ENCODE measurements at regions of chr10 and their contacts with region 1.

Region 1: DNA sequence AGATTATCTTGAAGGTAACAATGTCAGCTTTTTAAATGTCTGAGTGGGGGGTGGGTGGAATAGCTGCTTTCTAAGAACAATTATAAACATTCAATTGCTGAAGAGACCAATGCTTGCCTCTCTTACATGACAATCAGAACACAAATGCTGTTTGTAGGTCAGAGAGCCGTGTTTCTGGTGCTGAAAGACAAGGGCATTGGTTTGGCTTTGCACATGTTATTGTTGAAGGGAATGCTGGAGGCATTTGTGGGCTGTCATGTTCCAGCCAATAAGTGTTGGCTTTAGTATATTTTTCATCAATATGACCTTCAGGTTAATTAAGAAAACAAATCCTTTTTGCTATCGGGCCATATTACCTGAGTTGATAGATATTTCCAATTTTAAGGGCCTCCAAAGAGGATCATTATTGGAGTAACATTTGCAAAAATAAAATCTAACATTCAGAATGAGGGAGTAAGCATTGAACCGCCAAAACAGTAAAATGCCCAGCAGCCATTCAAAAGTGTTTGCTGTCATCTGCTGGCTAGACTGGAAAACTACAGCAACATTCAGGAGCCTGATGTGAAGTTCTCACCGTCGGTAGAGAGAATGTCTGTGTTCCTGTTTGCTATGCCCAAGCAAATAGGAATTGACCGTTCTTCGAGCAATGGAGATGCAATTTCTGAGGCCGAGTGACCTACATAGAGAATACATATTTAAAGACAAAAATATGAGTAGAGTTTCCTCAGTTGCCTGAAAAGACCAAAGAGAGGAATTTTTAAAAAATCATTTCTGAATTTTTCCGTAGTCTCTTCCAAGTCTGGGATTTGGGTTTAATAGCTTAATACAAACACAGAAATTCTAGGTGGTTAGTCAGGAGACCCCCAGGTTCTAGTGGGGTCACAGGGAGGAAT is 118.9 kb downstream of the APBB1IP start:
- DNase-seq: no peak
- H3K4me3 ChIP-seq: no peak overlapping the region
- H3K27ac ChIP-seq: no peak overlapping the region
- H3K4me1 ChIP-seq: no peaks in the 10 kb centered on the region
- H3K27me3 ChIP-seq: peaks cover 65% of the 10 kb centered on the region
- CTCF ChIP-seq: peak; percentile 85

Region 2: DNA sequence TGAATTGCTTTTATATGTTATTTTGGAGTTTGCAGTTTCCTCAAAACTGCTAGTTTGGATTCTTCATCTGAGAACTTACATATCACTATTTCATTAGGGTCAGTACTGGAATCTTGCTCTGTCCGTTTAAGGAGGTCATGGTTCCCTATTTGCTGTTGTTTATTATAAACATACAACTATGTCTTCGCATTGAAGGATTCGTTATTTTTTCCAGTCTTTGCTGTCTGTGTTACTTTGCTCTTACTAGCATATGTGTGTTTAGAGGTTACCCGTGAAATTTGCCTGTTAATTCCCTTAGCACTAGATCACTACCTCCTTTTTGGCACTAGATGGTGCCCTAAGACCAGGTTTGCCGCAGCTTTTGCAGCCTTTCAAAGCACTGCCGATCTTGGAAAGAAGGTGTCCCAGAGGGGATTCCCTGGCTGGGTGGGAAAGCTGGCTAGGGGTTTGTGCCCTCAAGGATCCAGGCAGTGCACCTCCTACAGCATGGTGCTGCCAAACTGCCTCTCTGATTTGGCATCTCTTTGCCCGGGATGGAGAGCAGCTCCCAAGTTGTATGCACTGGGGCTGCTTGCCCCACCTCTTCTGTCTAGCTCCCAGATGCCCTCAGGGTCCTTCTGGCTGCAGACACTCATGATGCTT is 221.9 kb before region 1 on chr10:
- intact Hi-C with region 1: loop called (anchors 5 kb)
- DNase-seq: peak; percentile 20
- H3K4me3 ChIP-seq: peak overlapping the region; percentile 33
- H3K27ac ChIP-seq: no peak overlapping the region
- H3K4me1 ChIP-seq: no peaks in the 10 kb centered on the region
- H3K27me3 ChIP-seq: no peaks in the 10 kb centered on the region
- CTCF ChIP-seq: peak; percentile 71

Measured in left ventricle myocardium inferior (tissue), 1 donor.